ENCODE measurements at regions of chr6 and their contacts with region 1.

Region 1: DNA sequence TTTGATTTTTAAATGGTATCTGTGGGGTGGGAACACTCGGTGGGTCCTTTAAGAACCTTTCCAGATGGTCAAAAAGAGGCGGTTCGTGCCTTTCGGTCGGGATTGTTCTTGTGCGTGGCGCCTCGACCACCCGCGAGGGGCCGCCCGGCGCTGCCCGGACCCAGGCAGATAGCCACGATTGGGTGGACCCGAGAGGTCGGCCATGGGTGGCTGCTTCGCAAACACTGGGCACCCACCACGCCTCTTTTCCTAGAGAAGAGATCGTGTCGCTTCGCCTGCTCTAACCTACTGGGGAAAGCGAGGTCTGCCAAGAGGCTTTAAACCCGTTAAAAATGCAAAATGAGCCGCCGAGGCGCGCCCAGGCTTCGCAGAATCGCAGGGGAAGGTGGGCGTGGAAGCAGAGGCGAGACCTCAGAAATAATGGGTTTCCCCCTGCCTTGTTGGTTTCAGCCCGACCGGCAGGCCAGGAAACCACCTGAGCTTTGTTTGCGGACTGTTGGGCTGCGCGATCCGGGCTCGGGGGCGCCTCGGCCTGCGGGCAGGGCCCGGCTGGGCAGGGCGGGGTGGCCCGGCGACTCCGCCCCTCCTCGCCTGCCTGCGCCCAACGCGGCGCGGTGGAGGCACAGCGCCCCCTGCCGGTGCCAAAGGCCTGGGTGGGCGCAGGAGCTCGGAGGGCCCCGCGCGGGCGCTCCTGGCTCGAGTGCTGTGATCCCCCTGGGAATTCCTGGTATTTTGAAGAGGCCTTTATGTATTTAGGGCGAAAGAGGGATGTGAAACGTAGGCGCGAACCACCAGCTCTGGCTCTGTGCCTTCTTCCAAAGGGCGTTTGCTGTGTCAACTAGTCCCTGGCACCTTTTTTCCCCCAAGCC is 1.6 kb downstream of the MARCKS start:
- DNase-seq: peak; percentile 85 to 91
- ATAC-seq: peak; percentile 84 to 98 (median 87)
- H3K4me3 ChIP-seq: peak overlapping the region; percentile 70 to 93 (median 76)
- H3K27ac ChIP-seq: peak overlapping the region; percentile 92 to 99 (median 94)
- H3K4me1 ChIP-seq: peaks cover 0 to 55% (median 34%) of the 10 kb centered on the region in 9 donors
- H3K27me3 ChIP-seq: peaks cover 0 to 9% (median 0%) of the 10 kb centered on the region in 7 donors
- CTCF ChIP-seq: peak; percentile 91 to 99 (median 98)

Region 2: GRCh38 chr6:113122060-113122459 is 736.7 kb before region 1 on chr6:
- intact Hi-C with region 1: loop called in 2 of 10 experiments (anchors 5 kb)
- DNase-seq: no peak
- ATAC-seq: peak in 4 of 8 donors; percentile 39 to 80 (median 61)
- H3K4me3 ChIP-seq: no peak overlapping the region
- H3K27ac ChIP-seq: peak overlapping the region in 2 of 10 donors; percentile 12 to 33
- H3K4me1 ChIP-seq: peaks cover 0 to 27% (median 3%) of the 10 kb centered on the region in 9 donors
- H3K27me3 ChIP-seq: no peaks in the 10 kb centered on the region
- CTCF ChIP-seq: peak in 6 of 9 donors; percentile 10 to 43 (median 36)

Region 3: DNA sequence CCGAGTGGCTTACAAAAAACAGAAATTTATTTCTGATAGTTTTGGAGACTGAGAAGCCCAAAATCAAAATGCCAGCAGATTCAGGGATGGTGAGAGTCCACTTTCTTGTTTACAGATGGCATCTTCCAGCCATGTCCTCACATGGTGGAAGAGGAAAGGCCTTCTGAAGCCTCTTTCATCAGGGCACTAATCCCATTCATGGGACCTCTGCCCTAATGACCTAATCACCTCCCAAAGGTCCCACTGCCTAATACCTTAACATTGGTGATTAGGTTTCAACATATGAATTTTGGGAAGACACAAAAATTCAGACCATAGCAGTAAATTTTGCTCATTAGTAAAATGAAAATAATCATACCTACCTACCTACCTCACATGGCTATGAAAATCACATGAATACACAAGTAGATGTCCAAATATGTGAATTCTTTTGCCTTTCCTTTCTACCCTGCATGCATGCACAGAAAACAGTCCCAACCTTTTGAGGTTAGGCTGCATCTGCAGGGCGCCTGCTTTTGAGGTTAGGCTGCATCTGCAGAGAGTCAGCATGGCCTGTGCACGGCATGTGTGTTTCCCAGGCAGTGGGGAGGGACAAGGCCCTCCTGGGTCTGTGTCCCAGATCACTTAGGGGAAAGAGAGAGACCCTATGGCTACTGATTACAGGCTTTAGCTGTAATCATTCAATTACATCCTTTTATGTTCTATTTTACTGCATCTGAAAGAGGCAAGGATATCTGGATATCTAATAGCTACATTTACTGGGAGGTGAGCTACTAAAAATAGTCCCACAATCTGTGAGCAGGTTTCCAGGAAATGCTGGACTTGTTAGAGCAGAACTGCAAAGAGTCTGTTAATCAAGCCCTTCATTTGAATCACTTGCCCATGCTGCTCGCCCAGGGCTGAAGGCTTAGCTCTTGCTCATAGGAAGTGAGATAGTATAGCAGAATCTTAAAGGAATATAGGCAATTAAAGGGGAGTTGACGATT is 499.3 kb before region 1 on chr6:
- intact Hi-C with region 1: loop called in 1 of 10 experiments (anchors 5 kb)
- DNase-seq: peak in 1 of 2 donors; percentile 17
- ATAC-seq: peak in 6 of 8 donors; percentile 40 to 73 (median 58)
- H3K4me3 ChIP-seq: no peak overlapping the region
- H3K27ac ChIP-seq: peak overlapping the region in 3 of 10 donors; percentile 2 to 25 (median 10)
- H3K4me1 ChIP-seq: peaks cover 0 to 34% (median 12%) of the 10 kb centered on the region in 9 donors
- H3K27me3 ChIP-seq: no peaks in the 10 kb centered on the region
- CTCF ChIP-seq: no peak

Region 4: DNA sequence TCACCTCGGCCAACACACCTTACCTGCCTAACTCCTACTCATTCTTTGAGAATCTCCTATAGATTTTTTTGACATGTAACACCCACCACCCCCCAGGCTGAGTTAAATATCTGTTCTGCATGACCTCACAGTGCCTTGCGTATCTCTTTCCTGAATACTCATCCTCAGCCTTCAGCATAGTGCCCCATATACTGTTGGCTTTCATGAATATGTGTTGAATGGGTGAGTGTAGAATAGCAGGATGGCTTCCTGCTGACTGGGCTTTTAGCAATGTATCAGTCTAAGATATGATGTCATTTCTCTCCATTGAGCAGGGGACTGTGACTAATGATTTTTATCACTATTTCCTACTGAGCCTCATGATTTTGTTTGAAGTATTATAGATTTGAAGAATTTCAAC is 363.2 kb before region 1 on chr6:
- intact Hi-C with region 1: loop called in 1 of 10 experiments (anchors 5 kb)
- DNase-seq: no peak
- ATAC-seq: peak in 4 of 8 donors; percentile 46 to 76 (median 62)
- H3K4me3 ChIP-seq: no peak overlapping the region
- H3K27ac ChIP-seq: peak overlapping the region in 2 of 10 donors; percentile 4 to 66
- H3K4me1 ChIP-seq: peaks cover 0 to 14% (median 0%) of the 10 kb centered on the region in 9 donors
- H3K27me3 ChIP-seq: no peaks in the 10 kb centered on the region
- CTCF ChIP-seq: no peak

Region 5: DNA sequence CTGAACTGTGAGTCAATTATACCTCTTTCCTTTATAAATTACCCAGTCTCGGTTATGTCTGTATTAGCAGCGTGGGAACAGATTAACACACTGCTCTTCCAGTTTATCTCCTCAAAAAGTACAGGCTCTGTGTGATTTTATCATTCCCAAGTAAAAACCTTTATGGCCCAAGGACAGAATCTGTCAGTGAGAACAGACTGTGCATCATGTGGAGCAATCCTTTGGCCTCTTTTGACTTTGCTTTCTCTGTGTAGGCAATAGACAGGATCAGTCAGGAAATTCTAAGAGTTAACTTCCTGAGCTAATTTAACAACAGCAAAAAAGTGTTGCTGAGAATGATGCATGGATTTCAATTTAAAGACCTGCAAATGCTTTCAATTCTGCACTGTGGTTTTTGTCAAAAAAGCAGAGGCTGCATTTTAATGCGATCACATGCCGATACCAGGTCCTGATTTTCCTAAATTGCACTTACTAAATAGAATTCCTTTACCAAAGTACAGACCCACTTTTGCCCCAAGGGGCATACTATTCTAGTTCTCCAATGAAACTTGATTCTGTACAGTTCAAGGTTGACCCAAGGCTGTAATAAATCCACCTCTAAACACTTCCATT is 248.2 kb before region 1 on chr6:
- intact Hi-C with region 1: no loop called
- DNase-seq: no peak
- ATAC-seq: no peak
- H3K4me3 ChIP-seq: no peak overlapping the region
- H3K27ac ChIP-seq: no peak overlapping the region
- H3K4me1 ChIP-seq: peaks cover 0 to 5% (median 0%) of the 10 kb centered on the region in 9 donors
- H3K27me3 ChIP-seq: no peaks in the 10 kb centered on the region
- CTCF ChIP-seq: no peak

Region 6: GRCh38 chr6:113632220-113632864 is 226.4 kb before region 1 on chr6:
- intact Hi-C with region 1: loop called in 2 of 10 experiments (anchors 10 kb)
- DNase-seq: peak in 1 of 2 donors; percentile 40
- ATAC-seq: peak in 7 of 8 donors; percentile 44 to 79 (median 64)
- H3K4me3 ChIP-seq: peak overlapping the region in 5 of 10 donors; percentile 9 to 30 (median 17)
- H3K27ac ChIP-seq: peak overlapping the region in 9 of 10 donors; percentile 7 to 85 (median 54)
- H3K4me1 ChIP-seq: peaks cover 0 to 74% (median 40%) of the 10 kb centered on the region in 9 donors
- H3K27me3 ChIP-seq: no peaks in the 10 kb centered on the region
- CTCF ChIP-seq: no peak

Region 7: GRCh38 chr6:113707194-113707593 is 151.5 kb before region 1 on chr6:
- intact Hi-C with region 1: no loop called
- DNase-seq: no peak
- ATAC-seq: no peak
- H3K4me3 ChIP-seq: no peak overlapping the region
- H3K27ac ChIP-seq: no peak overlapping the region
- H3K4me1 ChIP-seq: peaks cover 0 to 4% (median 0%) of the 10 kb centered on the region in 9 donors
- H3K27me3 ChIP-seq: no peaks in the 10 kb centered on the region
- CTCF ChIP-seq: no peak

Region 8: GRCh38 chr6:113732384-113732966 is 126.2 kb before region 1 on chr6:
- intact Hi-C with region 1: loop called in 4 of 10 experiments (anchors 10 kb)
- DNase-seq: peak; percentile 12 to 72
- ATAC-seq: peak; percentile 88 to 97 (median 94)
- H3K4me3 ChIP-seq: peak overlapping the region in 4 of 10 donors; percentile 1 to 22 (median 10)
- H3K27ac ChIP-seq: peak overlapping the region in 7 of 10 donors; percentile 15 to 70 (median 45)
- H3K4me1 ChIP-seq: peaks cover 0 to 28% (median 13%) of the 10 kb centered on the region in 9 donors
- H3K27me3 ChIP-seq: no peaks in the 10 kb centered on the region
- CTCF ChIP-seq: peak in 7 of 9 donors; percentile 11 to 52 (median 35)

Region 9: DNA sequence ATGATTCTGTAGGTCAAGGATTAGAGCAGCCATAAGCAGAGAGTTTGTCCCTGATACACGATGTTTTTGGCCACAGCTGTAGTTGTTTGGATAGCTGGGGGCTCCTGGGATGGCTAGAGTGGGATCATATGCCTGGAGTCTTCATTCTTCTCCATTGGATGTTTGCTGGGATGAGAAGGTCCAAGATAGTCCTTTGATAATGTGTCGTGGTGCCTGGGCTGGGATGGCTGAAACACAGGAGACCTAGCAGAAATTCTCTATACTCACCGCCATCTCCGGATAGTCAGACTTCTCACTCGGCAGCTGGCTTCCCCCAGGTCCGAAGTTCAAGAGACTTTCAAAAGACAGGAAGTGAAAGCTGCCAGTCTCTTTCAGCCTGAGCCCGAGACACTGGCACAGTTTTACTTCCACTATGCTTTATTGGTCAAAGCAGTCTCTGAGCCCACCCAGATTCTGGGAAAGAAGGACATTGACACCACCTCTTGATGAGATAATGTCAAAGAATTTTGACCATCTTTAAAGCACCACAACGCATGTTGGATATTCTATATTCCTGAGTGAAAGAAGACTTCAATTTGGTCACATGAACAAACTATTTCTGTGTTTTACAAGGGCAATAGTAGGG is 14.4 kb after region 1 on chr6:
- intact Hi-C with region 1: no loop called
- DNase-seq: peak; percentile 15 to 34
- ATAC-seq: peak in 4 of 8 donors; percentile 28 to 58 (median 45)
- H3K4me3 ChIP-seq: peak overlapping the region in 4 of 10 donors; percentile 2 to 19 (median 15)
- H3K27ac ChIP-seq: peak overlapping the region in 1 of 10 donors; percentile 7
- H3K4me1 ChIP-seq: no peaks in the 10 kb centered on the region
- H3K27me3 ChIP-seq: no peaks in the 10 kb centered on the region
- CTCF ChIP-seq: no peak

Region 10: DNA sequence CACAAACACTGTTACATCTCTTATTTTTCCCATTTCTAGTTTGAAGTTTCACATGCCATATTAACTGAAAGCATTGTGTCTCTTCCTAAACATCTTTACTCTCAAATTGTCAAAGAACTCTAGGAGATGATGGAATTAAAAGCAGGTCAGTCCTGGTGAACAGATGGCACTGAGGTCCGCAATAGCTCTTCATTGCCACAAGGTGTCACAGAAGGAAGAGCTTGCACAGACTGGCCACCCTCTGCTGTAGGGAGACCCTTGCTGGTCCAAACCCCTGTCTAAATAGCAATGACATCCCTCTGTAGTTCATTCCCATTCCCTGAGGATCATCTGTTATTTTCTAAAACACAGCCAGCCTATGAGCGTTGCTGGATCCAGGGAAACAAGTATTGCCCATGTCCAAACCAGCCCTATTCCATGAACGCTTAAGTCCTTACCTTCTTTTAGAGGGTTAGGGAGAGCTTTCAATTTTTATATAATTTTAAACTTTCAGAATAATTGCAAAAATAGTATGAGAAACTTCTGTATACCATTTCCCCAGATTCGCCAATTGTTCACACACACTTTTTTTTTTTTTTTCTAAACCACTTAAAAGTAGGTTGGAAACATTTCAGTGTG is 122.3 kb after region 1 on chr6:
- intact Hi-C with region 1: no loop called
- DNase-seq: no peak
- ATAC-seq: peak in 2 of 8 donors; percentile 42 to 63
- H3K4me3 ChIP-seq: no peak overlapping the region
- H3K27ac ChIP-seq: no peak overlapping the region
- H3K4me1 ChIP-seq: peaks cover 0 to 5% (median 0%) of the 10 kb centered on the region in 9 donors
- H3K27me3 ChIP-seq: no peaks in the 10 kb centered on the region
- CTCF ChIP-seq: peak in 7 of 9 donors; percentile 33 to 57 (median 50)